Gastrocnemius medialis (tissue), 4 donors: ENCODE measurements at regions of chr7 and their contacts with region 1.

Region 1: DNA sequence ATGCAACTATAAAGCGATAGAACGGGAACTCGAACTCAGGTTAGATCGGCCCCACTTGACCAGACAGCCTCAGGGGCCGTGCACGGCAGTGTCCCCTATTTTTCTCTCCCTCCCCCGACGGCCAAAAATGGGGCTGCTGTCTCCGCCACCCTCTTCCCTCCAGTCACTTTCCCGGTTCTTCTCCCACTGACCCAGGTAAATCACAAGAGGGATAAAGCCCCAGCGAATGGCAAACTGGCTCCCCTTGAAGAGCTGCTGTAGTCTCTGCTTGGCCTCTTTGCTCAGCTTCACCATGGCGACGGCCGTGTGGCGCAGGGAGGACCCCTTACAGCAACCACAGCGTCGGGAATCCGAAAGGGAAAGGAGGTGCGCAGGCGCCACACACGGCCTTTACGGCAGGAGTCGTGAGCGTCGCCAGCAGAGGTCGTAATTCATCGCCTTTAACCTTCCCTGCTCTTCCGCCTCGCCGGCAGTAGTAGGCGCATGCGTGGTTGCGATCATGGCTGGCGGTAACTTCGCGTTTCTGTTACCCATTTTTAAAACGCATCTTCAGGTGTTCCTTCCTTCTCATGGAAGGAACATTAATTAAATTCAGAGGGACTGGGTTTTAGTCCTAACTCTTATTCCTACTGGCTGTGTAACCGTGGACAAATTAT is at the start of gene TOMM7:
- DNase-seq: peak; percentile 82 to 91
- ATAC-seq: peak; percentile 97
- H3K4me3 ChIP-seq: peak within 1 kb of the TSS; percentile 80 to 98 (median 88)
- H3K27ac ChIP-seq: peak within 1 kb of the TSS; percentile 90 to 96 (median 93)
- H3K4me1 ChIP-seq: peaks cover 36 to 44% of the 10 kb centered on the region in 2 donors
- H3K27me3 ChIP-seq: no peaks in the 10 kb centered on the region
- CTCF ChIP-seq: peak; percentile 32 to 81 (median 70)
- POLR2A ChIP-seq: peak; percentile 67 to 80
- total RNA-seq, gene TOMM7: 124 to 235 (median 218) TPM

Region 2: GRCh38 chr7:22726345-22727185 is 96.0 kb before region 1 on chr7:
- in situ Hi-C with region 1: no loop called
- intact Hi-C with region 1: loop called (anchors 5 kb)
- DNase-seq: peak; percentile 45 to 66
- ATAC-seq: peak; percentile 86
- H3K4me3 ChIP-seq: peak overlapping the region; percentile 35 to 69 (median 40)
- H3K27ac ChIP-seq: peak overlapping the region; percentile 29 to 71 (median 46)
- H3K4me1 ChIP-seq: peaks cover 49 to 55% of the 10 kb centered on the region in 2 donors
- H3K27me3 ChIP-seq: no peaks in the 10 kb centered on the region
- CTCF ChIP-seq: peak; percentile 34 to 59 (median 59)
- POLR2A ChIP-seq: no peak

Region 3: DNA sequence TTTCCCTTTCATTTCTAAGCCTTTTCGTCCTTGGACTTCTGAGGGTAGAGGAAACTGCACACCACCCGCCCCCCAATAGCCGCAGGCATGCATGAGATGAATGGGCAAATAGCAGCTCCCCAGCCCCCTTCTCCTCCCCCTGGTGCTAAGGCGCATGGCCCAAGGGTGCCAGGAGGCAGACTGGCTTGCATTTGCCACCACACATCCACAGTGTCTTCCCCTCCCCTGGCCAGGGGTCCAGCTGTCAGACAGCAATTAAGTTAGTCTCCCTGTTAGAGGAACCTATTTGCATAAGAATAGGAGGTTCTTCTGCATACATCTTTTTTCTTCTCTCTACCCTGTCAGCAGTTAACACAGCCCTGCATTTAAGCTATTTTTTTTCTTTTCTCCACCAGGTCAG is 20.2 kb before region 1 on chr7:
- in situ Hi-C with region 1: no loop called
- intact Hi-C with region 1: no loop called
- DNase-seq: no peak
- ATAC-seq: no peak
- H3K4me3 ChIP-seq: no peak overlapping the region
- H3K27ac ChIP-seq: no peak overlapping the region
- H3K4me1 ChIP-seq: no peaks in the 10 kb centered on the region
- H3K27me3 ChIP-seq: no peaks in the 10 kb centered on the region
- CTCF ChIP-seq: no peak
- POLR2A ChIP-seq: no peak

Region 4: GRCh38 chr7:22854158-22855048 is 31.8 kb after region 1 on chr7:
- in situ Hi-C with region 1: no loop called
- intact Hi-C with region 1: loop called (anchors 1 kb)
- DNase-seq: peak; percentile 90 to 96
- ATAC-seq: peak; percentile 64 to 68
- H3K4me3 ChIP-seq: peak overlapping the region; percentile 71 to 86 (median 80)
- H3K27ac ChIP-seq: peak overlapping the region; percentile 94 to 99 (median 98)
- H3K4me1 ChIP-seq: peaks cover 36 to 46% of the 10 kb centered on the region in 2 donors
- H3K27me3 ChIP-seq: no peaks in the 10 kb centered on the region
- CTCF ChIP-seq: peak in 3 of 5 experiments; percentile 4 to 79 (median 70)
- POLR2A ChIP-seq: peak; percentile 87 to 90

Region 5: DNA sequence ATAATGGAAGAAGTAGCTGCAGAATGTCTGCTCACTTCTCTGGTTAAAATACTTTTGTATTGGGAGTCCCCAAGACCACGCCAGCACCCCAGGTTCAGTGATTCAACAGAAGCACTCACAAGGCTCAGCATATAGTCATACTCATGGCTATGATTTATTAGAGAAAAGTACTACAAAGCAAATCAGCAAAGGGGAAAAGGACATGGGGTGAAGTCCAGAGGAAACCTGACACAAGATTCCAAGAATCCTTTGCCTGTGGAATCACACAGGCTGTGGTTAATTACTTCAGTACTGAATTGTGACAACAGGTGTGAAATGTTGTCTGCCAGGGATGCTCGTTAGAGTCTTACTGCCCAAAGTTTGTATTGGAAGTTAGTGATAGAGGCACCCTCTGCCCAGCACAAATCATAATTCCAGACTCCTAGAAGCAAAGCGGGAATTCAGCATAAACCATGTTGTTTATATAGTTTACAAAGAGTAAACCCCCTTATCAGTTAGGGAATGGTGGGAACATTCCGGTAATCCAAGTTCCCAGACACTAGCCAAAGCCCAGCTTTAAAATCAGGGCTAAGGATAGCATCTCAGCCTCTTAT is 112.0 kb after region 1 on chr7:
- in situ Hi-C with region 1: no loop called
- intact Hi-C with region 1: no loop called
- DNase-seq: no peak
- ATAC-seq: peak; percentile 44 to 51
- H3K4me3 ChIP-seq: no peak overlapping the region
- H3K27ac ChIP-seq: no peak overlapping the region
- H3K4me1 ChIP-seq: peaks cover 13% of the 10 kb centered on the region in 2 donors
- H3K27me3 ChIP-seq: no peaks in the 10 kb centered on the region
- CTCF ChIP-seq: no peak
- POLR2A ChIP-seq: no peak

Region 6: GRCh38 chr7:23013715-23014649 is 191.4 kb after region 1 on chr7 and contains the start of gene HYCC1:
- in situ Hi-C with region 1: no loop called
- intact Hi-C with region 1: loop called (anchors 2 kb)
- DNase-seq: peak; percentile 100
- ATAC-seq: peak; percentile 96
- H3K4me3 ChIP-seq: peak within 1 kb of the TSS; percentile 80 to 94 (median 86)
- H3K27ac ChIP-seq: peak within 1 kb of the TSS; percentile 87 to 92 (median 91)
- H3K4me1 ChIP-seq: peaks cover 37 to 45% of the 10 kb centered on the region in 2 donors
- H3K27me3 ChIP-seq: no peaks in the 10 kb centered on the region
- CTCF ChIP-seq: peak; percentile 72 to 78 (median 76)
- POLR2A ChIP-seq: peak; percentile 96 to 99
- total RNA-seq, gene HYCC1: 26.9 to 147 (median 72.0) TPM

Region 7: DNA sequence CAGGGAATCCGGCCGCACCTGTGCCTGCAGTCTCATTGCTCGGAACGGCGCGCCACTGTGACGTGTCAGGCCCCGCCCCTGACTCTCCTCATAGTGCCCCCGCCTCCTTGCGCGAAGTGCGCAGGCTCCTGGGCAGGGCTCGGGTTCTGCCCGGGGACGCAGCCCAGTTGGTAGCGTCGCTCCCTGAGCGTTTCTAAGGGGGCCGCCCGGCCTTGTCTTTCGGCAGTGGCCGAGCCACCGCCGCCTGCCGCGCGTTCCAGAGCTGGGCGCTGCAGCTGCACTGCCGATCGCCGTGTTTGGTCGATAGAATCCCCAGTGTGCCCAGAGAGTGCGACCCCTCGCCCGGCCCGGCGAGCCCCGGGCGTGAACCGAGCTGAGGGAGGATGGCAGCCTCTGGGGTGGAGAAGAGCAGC is 283.0 kb after region 1 on chr7 and contains the start of gene KLHL7:
- in situ Hi-C with region 1: no loop called
- intact Hi-C with region 1: loop called (anchors 5 kb)
- DNase-seq: peak; percentile 95 to 96
- ATAC-seq: peak; percentile 95 to 97
- H3K4me3 ChIP-seq: peak within 1 kb of the TSS; percentile 84 to 99 (median 88)
- H3K27ac ChIP-seq: peak within 1 kb of the TSS; percentile 87 to 96 (median 92)
- H3K4me1 ChIP-seq: peaks cover 33 to 48% of the 10 kb centered on the region in 2 donors
- H3K27me3 ChIP-seq: no peaks in the 10 kb centered on the region
- CTCF ChIP-seq: peak in 1 of 5 experiments; percentile 16
- POLR2A ChIP-seq: peak; percentile 86 to 90
- total RNA-seq, gene KLHL7: 12.2 to 21.4 (median 14.9) TPM